ENCODE measurements at regions of chr10 and their contacts with region 1.

Region 1: GRCh38 chr10:87734987-87735827 is 75.5 kb downstream of the PAPSS2 start:
- DNase-seq: peak; percentile 51
- ATAC-seq: peak; percentile 89
- H3K4me3 ChIP-seq: no peak overlapping the region
- H3K27ac ChIP-seq: no peak overlapping the region
- H3K4me1 ChIP-seq: peaks cover 4% of the 10 kb centered on the region; the same call in 1 of the 2 replicates
- H3K27me3 ChIP-seq: no peaks in the 10 kb centered on the region
- CTCF ChIP-seq: peak; percentile 80
- POLR2A ChIP-seq: no peak
- RAD21 ChIP-seq: peak; percentile 80

Region 2: GRCh38 chr10:87531908-87532622 is 203.1 kb before region 1 on chr10:
- CTCF ChIA-PET with region 1: interaction called, 5 read pairs
- POLR2A ChIA-PET with region 1: no interaction called
- dilution Hi-C with region 1: no loop called
- in situ Hi-C with region 1: no loop called
- intact Hi-C with region 1: loop called (anchors 1 kb)
- DNase-seq: peak; percentile 79
- ATAC-seq: peak; percentile 85
- H3K4me3 ChIP-seq: no peak overlapping the region
- H3K27ac ChIP-seq: no peak overlapping the region
- H3K4me1 ChIP-seq: peaks cover 3% of the 10 kb centered on the region; the same call in 1 of the 2 replicates
- H3K27me3 ChIP-seq: no peaks in the 10 kb centered on the region
- CTCF ChIP-seq: no peak
- POLR2A ChIP-seq: no peak
- RAD21 ChIP-seq: no peak

Region 3: DNA sequence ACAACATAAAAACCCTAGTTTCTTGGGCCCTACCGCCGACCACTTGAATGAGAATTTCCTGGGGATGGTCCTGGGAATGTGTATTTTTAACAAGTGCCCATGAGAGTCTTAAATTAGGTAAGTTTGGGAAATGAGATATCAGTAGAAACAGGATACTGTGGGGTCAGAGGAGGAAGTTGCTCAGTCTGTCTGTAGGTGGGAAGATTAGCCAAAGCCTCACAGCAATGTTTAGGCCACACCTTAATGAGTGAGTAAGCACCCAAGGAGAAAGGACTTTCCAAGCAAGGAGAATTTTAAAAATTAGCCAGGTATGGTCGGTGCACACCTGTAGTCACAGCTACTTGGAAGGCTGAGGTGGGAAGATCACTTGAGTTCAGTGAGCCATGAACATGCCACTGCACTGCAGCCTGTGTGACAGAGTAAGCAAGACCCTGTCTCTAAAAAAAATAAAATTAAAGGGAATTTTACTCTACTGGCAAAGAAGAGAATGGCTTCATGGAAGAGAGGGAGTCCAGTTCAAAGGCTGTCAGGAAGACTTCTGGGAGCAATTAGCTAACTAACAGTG is 43.6 kb before region 1 on chr10:
- CTCF ChIA-PET with region 1: no interaction called
- POLR2A ChIA-PET with region 1: no interaction called
- dilution Hi-C with region 1: no loop called
- in situ Hi-C with region 1: no loop called
- intact Hi-C with region 1: no loop called
- DNase-seq: no peak
- ATAC-seq: no peak
- H3K4me3 ChIP-seq: no peak overlapping the region
- H3K27ac ChIP-seq: no peak overlapping the region
- H3K4me1 ChIP-seq: peaks cover 8% of the 10 kb centered on the region
- H3K27me3 ChIP-seq: no peaks in the 10 kb centered on the region
- CTCF ChIP-seq: no peak
- POLR2A ChIP-seq: no peak
- RAD21 ChIP-seq: no peak

Region 4: DNA sequence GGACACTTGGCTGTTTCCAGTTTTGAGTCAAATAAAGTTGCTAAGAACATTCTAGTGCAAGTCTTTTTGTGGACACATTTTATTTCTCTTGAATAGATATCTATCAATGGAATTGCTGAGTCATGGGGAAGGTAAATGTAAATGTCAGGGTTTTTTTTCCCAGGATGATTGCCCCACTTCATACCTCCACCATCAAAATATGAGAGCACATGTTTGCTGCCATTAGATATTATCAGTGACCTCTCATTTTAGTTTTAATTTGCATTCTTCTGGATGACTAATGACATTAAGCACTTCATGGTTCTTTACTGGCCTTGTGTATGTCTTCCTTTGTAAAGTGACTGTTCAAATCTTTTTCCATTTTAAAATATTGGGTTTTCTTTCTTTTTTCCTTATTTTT is 29.9 kb before region 1 on chr10:
- CTCF ChIA-PET with region 1: no interaction called
- POLR2A ChIA-PET with region 1: no interaction called
- dilution Hi-C with region 1: no loop called
- in situ Hi-C with region 1: no loop called
- intact Hi-C with region 1: loop called (anchors 1 kb)
- DNase-seq: peak; percentile 44
- ATAC-seq: peak; percentile 30
- H3K4me3 ChIP-seq: no peak overlapping the region
- H3K27ac ChIP-seq: no peak overlapping the region
- H3K4me1 ChIP-seq: peaks cover 8% of the 10 kb centered on the region
- H3K27me3 ChIP-seq: no peaks in the 10 kb centered on the region
- CTCF ChIP-seq: no peak
- POLR2A ChIP-seq: no peak
- RAD21 ChIP-seq: no peak

Region 5: GRCh38 chr10:88114368-88114767 is 379.2 kb after region 1 on chr10:
- CTCF ChIA-PET with region 1: no interaction called
- POLR2A ChIA-PET with region 1: no interaction called
- dilution Hi-C with region 1: no loop called
- in situ Hi-C with region 1: no loop called
- intact Hi-C with region 1: no loop called
- DNase-seq: peak; percentile 25
- ATAC-seq: no peak
- H3K4me3 ChIP-seq: no peak overlapping the region
- H3K27ac ChIP-seq: no peak overlapping the region
- H3K4me1 ChIP-seq: peaks cover 23% of the 10 kb centered on the region
- H3K27me3 ChIP-seq: no peaks in the 10 kb centered on the region
- CTCF ChIP-seq: peak; percentile 34
- POLR2A ChIP-seq: no peak
- RAD21 ChIP-seq: peak; percentile 48

Measured in IMR-90 (cell line).